Activated CD4-positive, alpha-beta memory T cell treated with anti-CD3 and anti-CD28 coated beads for 36 hours (primary cell): ENCODE measurements at regions of chr11 and their contacts with region 1.

Region 1: DNA sequence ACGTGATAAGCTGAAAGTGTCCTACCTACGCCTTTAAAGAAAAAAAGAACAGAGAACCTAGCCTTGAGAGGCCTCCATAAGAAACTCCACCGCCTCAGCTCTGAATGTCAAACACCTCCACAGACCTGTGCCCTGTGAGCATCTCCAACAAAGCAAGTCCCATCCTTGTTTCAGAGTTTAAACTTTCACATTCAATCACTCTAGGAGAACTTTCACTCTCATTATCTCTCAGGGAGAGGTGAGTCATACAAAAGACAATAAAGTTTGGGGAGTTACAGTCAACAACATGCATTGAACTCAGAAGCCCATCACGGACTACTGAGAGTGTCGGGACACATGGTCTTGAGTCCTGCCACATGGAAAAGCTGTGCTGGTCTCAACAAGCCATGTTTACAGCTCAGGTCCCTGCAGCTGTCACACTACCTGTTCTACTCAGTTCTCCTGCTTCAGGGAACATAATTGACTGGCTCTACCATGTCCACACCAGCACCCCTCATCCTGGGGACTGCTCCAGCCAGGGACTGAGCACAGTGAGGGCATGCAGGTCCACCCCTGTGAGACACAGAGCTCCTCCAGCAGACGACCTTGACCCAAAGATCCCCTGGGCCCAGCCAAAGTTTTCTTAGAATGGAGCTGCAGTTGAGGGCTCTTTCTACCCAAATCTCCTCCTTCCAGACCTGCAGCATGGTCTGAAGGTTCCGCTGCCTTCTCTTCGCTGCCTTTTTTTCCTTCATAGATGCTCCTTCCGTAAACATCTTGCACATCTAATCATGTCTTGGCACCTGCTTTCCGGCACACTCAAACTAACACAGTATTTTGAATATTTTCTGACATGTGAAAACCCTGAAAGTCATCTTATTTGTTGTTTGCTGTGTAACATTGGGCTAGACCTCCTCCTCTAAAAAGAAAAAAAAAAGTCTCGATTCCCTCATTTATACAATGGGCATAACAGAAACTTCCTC is 114.9 kb downstream of the ETS1 start:
- DNase-seq: peak; percentile 83
- H3K4me3 Mint-ChIP-seq: peak overlapping the region; percentile 64
- H3K27ac Mint-ChIP-seq: peak overlapping the region; percentile 99
- H3K4me1 Mint-ChIP-seq: peaks cover 97% of the 10 kb centered on the region
- H3K27me3 Mint-ChIP-seq: no peaks in the 10 kb centered on the region

Region 2: GRCh38 chr11:128232588-128232987 is 239.8 kb before region 1 on chr11:
- CTCF ChIA-PET with region 1: no interaction called
- POLR2A ChIA-PET with region 1: no interaction called
- intact Hi-C with region 1: loop called (anchors 2 kb)
- DNase-seq: peak; percentile 85
- H3K4me3 Mint-ChIP-seq: no peak overlapping the region
- H3K27ac Mint-ChIP-seq: peak overlapping the region; percentile 69
- H3K4me1 Mint-ChIP-seq: peaks cover 52% of the 10 kb centered on the region
- H3K27me3 Mint-ChIP-seq: no peaks in the 10 kb centered on the region

Region 3: GRCh38 chr11:128342511-128343134 is 129.8 kb before region 1 on chr11:
- CTCF ChIA-PET with region 1: interaction called, 3 read pairs
- POLR2A ChIA-PET with region 1: interaction called, 9 read pairs
- intact Hi-C with region 1: loop called (anchors 1 kb)
- DNase-seq: peak; percentile 93
- H3K4me3 Mint-ChIP-seq: peak overlapping the region; percentile 66
- H3K27ac Mint-ChIP-seq: peak overlapping the region; percentile 88
- H3K4me1 Mint-ChIP-seq: peaks cover 88% of the 10 kb centered on the region
- H3K27me3 Mint-ChIP-seq: no peaks in the 10 kb centered on the region

Region 4: DNA sequence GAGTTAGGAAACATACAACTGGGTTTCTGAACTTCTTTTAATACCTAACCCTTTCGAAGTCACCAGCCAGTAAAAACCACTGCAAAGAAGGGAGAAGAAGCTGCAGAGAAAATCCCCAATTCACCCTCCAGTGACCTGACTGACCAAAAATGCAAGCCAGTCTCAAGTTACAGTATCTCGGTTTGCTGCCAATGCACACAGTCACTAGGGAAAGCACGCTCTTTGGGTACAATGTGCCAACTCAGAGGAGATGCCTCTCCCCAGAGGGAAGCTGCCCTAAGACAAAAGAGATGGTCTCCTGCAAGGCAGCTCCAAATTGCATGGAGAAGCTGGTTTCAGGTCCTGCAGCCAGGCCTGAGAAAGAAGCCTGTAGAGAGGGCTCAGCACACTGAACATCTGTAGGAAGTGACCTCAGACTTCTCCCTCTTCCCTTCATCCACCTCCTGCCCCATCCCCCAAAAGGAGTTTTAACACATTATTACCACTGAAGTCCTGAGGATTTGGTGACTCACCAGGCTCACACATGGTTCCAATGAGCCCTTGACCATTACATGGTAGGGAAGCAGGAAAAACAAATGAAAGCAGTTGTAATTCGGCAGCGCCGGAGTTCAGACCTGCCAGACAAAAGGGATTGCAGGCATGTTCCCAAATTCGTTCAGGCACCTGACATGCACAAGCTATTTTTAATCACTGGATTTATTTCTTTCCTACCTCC is 24.8 kb after region 1 on chr11:
- CTCF ChIA-PET with region 1: interaction called, 4 read pairs
- POLR2A ChIA-PET with region 1: interaction called, 85 read pairs
- intact Hi-C with region 1: loop called (anchors 1 kb)
- DNase-seq: peak; percentile 67
- H3K4me3 Mint-ChIP-seq: peak overlapping the region; percentile 71
- H3K27ac Mint-ChIP-seq: peak overlapping the region; percentile 91
- H3K4me1 Mint-ChIP-seq: peaks cover 95% of the 10 kb centered on the region
- H3K27me3 Mint-ChIP-seq: no peaks in the 10 kb centered on the region

Region 5: DNA sequence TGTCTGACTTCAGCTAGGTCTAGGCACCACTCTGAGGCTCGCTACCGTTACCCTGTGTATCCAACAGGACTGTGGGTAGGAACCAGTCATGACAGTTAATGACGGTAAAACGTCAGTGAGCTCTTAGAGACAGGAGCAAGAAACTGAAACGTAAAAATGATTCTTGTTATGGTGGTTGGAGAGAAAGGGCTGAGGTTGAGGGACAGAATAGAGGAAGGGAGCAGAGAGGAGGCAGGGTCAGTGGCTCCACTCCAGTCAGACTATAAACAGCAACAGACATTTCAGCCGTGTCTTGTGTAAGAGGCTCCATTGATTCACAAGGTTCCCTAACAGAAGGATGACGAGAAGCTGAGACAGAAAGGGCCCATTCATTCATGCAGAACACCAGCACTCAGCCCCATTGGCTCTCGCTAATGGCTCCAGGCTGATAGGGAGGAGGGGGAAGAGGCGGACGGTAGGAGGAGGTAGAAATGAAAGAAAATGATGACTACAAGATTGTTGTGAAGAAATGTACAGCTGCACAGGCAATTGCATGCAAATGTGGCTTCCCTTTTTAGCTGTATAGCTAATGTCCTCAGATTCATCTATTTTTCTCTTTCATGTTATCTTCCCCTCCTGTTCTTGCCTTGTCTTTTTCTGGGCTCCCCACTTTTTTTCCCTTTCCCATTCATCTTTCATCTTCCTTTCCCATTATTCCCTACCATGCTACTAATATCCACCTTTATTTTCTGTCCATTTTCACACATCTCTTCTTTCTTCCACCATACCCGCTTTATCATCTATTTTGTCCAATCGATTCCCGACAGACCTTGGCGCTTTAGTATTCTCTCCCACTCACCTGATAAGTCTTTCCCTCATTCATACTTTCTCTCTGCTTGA is 80.6 kb after region 1 on chr11:
- CTCF ChIA-PET with region 1: no interaction called
- POLR2A ChIA-PET with region 1: interaction called, 3 read pairs
- intact Hi-C with region 1: loop called (anchors 1 kb)
- DNase-seq: peak; percentile 72
- H3K4me3 Mint-ChIP-seq: peak overlapping the region; percentile 70
- H3K27ac Mint-ChIP-seq: peak overlapping the region; percentile 94
- H3K4me1 Mint-ChIP-seq: peaks cover 65% of the 10 kb centered on the region
- H3K27me3 Mint-ChIP-seq: no peaks in the 10 kb centered on the region

Region 6: DNA sequence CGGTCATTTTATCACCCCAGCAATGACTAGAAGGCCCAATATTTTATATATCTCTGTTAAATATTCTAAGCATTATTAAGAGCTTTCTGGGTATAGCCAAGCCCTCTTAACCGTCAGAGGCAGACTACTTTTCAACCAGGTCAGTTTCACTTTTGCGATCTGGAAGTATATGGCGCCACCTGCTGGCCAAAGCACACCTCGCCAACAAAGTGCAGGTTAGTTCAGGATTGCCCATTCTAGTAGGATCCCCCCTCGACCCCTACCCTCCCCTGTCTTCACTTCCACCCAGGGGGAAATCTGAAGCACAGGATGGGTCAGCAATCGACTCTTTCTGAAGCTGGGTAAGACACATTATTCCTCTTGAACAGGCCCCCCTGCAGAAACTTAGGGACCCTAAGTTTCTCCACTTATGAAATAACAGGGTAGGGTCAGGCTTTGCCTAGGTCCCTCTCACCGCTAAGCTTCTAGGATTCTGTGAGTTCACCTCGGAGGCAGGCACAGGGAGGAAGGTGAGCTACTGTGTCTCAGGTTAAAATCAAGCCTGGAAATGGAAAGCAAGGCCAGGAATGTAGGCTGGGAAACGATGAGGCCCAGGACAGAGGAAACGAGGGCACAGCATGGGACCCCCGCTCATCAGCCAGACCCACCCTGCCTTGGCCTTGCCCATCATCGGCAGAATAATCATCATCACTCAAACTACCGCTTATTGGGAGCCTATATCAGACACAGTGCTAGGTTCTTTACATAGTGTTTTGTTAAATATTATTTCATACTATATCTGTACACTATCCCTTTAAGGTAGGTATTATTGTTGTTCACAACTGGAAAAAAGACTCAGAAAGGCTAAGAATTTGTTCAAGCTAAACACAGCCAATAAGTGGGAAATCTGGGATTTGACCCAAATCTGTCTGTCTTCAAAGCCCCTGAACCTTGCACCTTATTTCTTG is 359.0 kb after region 1 on chr11:
- CTCF ChIA-PET with region 1: no interaction called
- POLR2A ChIA-PET with region 1: no interaction called
- intact Hi-C with region 1: loop called (anchors 5 kb)
- DNase-seq: peak; percentile 93
- H3K4me3 Mint-ChIP-seq: peak overlapping the region; percentile 30
- H3K27ac Mint-ChIP-seq: peak overlapping the region; percentile 89
- H3K4me1 Mint-ChIP-seq: peaks cover 19% of the 10 kb centered on the region
- H3K27me3 Mint-ChIP-seq: no peaks in the 10 kb centered on the region